AG04450 (cell line): ENCODE measurements at regions of chr1 and their contacts with region 1.

Region 1: DNA sequence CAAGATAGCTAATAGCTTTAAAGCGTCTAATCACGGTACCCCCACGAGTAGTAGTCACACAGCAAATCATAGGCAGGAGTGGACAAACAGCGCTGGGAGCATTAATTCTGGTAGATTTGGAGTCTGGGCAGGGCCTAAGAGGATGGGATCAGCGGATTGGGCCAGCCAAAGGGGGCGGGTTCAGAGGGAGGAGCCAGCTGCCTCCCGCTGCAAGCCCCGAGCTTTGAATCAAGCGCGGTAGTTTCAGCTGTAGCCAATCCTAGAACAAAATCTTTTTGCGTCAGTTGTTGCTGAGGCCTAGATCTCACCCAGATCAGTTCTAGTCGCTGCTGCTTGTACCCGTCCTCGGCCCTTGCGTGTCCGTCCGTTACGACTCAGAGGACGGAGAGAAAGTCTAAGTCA is 576 bp upstream of the NASP start:
- DNase-seq: peak; percentile 90
- H3K4me3 ChIP-seq: peak overlapping the region; percentile 99
- H3K27ac ChIP-seq: peak overlapping the region; percentile 75
- H3K27me3 ChIP-seq: no peaks in the 10 kb centered on the region
- CTCF ChIP-seq: no peak

Region 2: DNA sequence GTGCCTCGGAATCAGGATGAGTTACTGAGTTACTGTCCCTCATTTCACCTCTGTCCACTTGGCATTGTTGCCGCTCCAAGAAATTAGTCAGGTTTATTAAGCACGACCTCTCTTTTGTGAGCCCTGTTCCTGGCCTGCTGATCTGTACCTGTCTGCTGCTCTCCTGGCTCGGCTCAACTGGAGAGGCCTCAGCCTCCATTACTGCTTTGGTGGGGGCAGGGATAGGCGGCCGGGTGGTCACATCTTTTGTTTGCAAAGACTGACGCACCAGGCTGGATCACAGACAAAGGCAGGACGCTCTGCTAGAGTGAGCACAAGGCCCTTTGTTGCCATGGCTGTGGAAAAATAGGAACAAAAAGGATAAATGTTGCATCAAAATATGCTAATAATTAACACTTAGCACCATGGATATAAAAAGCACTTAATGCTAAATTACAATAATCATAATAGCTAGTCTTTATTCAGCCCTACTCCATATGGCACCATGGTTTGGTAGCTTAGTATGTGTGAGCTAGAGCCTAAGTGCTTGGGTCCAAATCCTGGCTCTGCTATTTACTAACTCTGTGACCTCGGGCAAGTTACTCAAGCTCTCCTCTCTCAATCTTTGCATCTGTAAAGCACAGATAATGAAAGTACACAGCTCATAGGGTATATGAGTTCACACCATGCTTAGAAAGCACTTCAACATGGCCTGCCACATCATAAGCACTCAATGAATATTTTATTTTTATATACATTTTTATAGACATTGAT is 285.5 kb before region 1 on chr1:
- CTCF ChIA-PET with region 1: no interaction called
- POLR2A ChIA-PET with region 1: no interaction called
- DNase-seq: no peak
- H3K4me3 ChIP-seq: no peak overlapping the region
- H3K27ac ChIP-seq: no peak overlapping the region
- H3K27me3 ChIP-seq: no peaks in the 10 kb centered on the region
- CTCF ChIP-seq: no peak

Region 3: DNA sequence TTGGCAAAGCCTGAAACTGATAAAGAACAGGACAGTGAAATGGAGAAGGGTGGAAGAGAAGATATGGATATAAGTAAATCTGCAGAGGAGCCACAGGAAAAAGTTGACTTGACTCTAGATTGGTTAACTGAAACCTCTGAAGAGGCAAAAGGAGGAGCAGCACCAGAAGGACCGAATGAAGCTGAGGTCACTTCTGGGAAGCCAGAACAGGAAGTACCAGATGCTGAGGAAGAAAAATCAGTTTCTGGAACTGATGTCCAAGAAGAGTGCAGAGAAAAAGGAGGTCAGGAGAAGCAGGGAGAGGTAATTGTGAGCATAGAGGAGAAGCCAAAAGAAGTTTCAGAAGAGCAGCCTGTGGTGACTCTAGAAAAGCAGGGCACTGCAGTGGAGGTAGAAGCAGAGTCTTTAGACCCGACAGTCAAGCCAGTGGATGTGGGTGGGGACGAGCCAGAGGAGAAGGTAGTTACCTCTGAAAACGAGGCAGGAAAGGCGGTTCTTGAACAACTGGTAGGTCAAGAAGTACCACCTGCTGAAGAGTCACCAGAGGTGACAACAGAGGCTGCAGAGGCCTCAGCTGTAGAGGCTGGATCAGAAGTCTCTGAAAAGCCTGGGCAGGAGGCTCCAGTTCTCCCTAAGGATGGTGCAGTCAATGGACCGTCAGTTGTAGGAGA is 24.3 kb after region 1 on chr1:
- CTCF ChIA-PET with region 1: no interaction called
- POLR2A ChIA-PET with region 1: interaction called, 11 read pairs
- DNase-seq: no peak
- H3K4me3 ChIP-seq: no peak overlapping the region
- H3K27ac ChIP-seq: no peak overlapping the region
- H3K27me3 ChIP-seq: no peaks in the 10 kb centered on the region
- CTCF ChIP-seq: no peak

Region 4: DNA sequence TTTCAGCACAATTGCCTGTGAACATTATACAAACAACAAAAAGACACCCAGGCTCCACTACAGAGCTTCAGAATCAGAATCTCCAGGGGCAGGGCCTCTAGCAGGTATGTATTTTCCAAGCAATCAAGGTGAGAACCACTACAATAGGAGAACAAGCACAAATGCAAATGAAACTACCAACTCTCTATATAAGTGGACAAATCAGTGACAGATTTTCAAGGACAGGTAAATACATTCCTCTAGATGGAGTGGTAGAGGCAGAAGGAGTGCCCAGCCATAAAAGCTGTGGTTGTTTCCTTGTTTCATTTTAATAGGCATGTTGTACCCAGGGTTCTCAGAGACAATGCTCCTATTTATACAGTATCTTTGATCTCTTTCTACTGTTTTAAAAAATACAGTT is 60.7 kb after region 1 on chr1:
- CTCF ChIA-PET with region 1: no interaction called
- POLR2A ChIA-PET with region 1: no interaction called
- DNase-seq: no peak
- H3K4me3 ChIP-seq: no peak overlapping the region
- H3K27ac ChIP-seq: no peak overlapping the region
- H3K27me3 ChIP-seq: no peaks in the 10 kb centered on the region
- CTCF ChIP-seq: no peak

Region 5: DNA sequence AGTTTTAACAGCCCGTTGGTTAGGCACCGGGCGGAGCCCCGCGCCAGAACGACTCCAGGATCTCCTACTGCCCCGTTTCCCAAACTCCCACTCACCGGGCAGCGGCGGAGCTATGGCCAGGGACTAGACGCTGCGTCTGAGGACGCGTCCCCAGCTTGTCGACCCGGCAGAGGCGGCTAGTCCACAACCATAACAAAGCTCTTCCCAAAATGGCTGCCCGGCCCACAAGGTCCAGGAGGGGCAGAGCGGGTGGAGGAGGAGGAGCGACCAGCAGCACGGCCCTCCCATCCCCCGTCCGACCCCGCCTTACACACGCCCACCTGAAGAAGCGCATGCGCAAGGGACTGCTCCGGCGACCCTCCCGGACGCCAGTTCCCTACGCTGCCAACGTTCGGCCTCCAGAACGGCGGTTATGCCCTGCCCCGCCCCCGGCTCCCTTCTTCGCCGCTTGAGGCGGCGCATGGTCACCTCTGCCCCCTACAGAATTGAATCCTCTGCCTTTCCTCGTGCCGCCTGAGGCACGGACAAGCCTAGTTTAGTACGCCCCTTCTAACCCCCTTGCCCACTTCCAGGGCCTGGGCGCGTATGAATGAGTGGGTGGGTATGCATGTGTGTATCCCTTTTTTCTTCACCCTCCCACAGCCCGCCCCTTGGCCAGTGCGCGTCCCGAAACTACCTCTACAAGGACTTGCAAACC is 103.2 kb after region 1 on chr1 and contains the start of gene GPBP1L1:
- CTCF ChIA-PET with region 1: no interaction called
- POLR2A ChIA-PET with region 1: interaction called, 12 read pairs
- DNase-seq: peak; percentile 96
- H3K4me3 ChIP-seq: peak within 1 kb of the TSS; percentile 98
- H3K27ac ChIP-seq: peak within 1 kb of the TSS; percentile 94
- H3K27me3 ChIP-seq: no peaks in the 10 kb centered on the region
- CTCF ChIP-seq: no peak
- polyA plus RNA-seq, gene GPBP1L1: 47.5 and 63.0 TPM in 2 replicates

Region 6: GRCh38 chr1:45730475-45731339 is 147.4 kb after region 1 on chr1:
- CTCF ChIA-PET with region 1: no interaction called
- POLR2A ChIA-PET with region 1: no interaction called
- DNase-seq: no peak
- H3K4me3 ChIP-seq: no peak overlapping the region
- H3K27ac ChIP-seq: no peak overlapping the region
- H3K27me3 ChIP-seq: no peaks in the 10 kb centered on the region
- CTCF ChIP-seq: no peak